ENCODE measurements at regions of chr1 and their contacts with region 1.

Region 1: GRCh38 chr1:94527447-94528031 is 14.0 kb downstream of the F3 start:
- DNase-seq: no peak
- ATAC-seq: peak; percentile 69
- H3K4me3 Mint-ChIP-seq: no peak overlapping the region
- H3K27ac Mint-ChIP-seq: no peak overlapping the region
- H3K4me1 Mint-ChIP-seq: peaks cover 28% of the 10 kb centered on the region
- H3K27me3 Mint-ChIP-seq: no peaks in the 10 kb centered on the region
- CTCF ChIP-seq: no peak

Region 2: GRCh38 chr1:94599095-94599813 is 71.7 kb after region 1 on chr1:
- CTCF ChIA-PET with region 1: interaction called, 14 read pairs
- POLR2A ChIA-PET with region 1: no interaction called
- DNase-seq: peak; percentile 59
- ATAC-seq: peak; percentile 94
- H3K4me3 Mint-ChIP-seq: no peak overlapping the region
- H3K27ac Mint-ChIP-seq: no peak overlapping the region
- H3K4me1 Mint-ChIP-seq: peaks cover 14% of the 10 kb centered on the region; the same call in 1 of the 2 replicates
- H3K27me3 Mint-ChIP-seq: no peaks in the 10 kb centered on the region
- CTCF ChIP-seq: no peak

Measured in WTC11 (cell line).